CD4-positive, alpha-beta memory T cell (primary cell): ENCODE measurements at regions of chr6 and their contacts with region 1.

Region 1: DNA sequence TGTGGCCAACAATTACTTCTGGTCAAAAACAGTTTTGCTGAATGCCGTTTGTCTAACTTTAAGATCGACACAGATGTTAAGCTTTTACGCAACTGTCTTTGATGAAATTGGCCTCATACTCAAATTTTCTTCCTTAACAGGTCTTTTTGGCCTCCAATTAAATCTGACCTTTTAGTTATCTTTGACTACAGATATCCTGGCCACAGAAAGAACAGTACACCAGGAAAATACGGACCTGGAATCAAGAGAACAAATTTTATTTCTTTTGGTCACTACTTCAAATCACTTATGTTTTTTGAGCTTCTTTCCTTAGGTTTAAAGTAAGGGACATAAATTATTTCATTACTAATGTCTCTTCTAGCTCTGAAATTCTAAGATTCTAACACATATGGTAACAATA is 49.8 kb downstream of the IBTK start:
- DNase-seq: no peak
- H3K4me3 ChIP-seq: no peak overlapping the region
- H3K4me3 Mint-ChIP-seq: no peak overlapping the region
- H3K27ac ChIP-seq: no peak overlapping the region
- H3K27ac Mint-ChIP-seq: peak overlapping the region in 2 of 7 donors; percentile 4 to 53
- H3K4me1 ChIP-seq: no peaks in the 10 kb centered on the region
- H3K4me1 Mint-ChIP-seq: no peaks in the 10 kb centered on the region
- H3K27me3 ChIP-seq: no peaks in the 10 kb centered on the region
- H3K27me3 Mint-ChIP-seq: no peaks in the 10 kb centered on the region

Region 2: DNA sequence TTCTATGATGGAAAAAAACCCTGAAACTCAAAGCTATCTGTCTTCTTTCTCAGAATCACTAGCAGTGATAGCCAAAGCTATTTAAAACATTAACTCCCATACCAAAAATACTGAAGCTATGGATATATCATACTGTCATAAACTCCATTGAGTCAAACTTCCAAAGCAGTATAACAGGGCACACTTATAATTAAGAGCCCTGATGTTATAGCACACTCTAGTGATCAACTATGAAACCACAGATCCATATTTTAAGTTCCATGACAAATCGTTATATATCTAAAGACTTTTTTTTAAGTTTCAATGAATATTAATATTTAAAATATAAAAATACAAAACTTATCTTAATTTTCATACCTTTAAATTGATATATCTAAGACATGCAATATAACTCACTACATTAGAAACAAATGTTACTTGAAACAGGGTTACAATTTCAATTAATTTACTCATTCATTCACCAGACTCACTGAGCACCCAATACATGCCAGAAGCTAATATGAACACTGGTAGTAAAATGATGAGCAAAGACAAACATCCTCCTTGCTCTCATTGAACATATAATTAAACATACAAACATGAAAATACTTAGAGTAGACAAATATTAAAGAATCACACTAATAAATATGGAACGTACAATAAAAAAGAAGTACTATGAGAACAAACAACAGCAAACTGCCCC is 19.6 kb before region 1 on chr6:
- CTCF ChIA-PET with region 1: no interaction called
- POLR2A ChIA-PET with region 1: no interaction called
- intact Hi-C with region 1: loop called (anchors 2 kb)
- DNase-seq: no peak
- H3K4me3 ChIP-seq: no peak overlapping the region
- H3K4me3 Mint-ChIP-seq: no peak overlapping the region
- H3K27ac ChIP-seq: no peak overlapping the region
- H3K27ac Mint-ChIP-seq: peak overlapping the region in 2 of 7 donors; percentile 29 to 30
- H3K4me1 ChIP-seq: no peaks in the 10 kb centered on the region
- H3K4me1 Mint-ChIP-seq: peaks cover 0 to 2% (median 0%) of the 10 kb centered on the region in 4 donors
- H3K27me3 ChIP-seq: no peaks in the 10 kb centered on the region
- H3K27me3 Mint-ChIP-seq: no peaks in the 10 kb centered on the region